MCF 10A (cell line): ENCODE measurements at regions of chr3 and their contacts with region 1.

Region 1: GRCh38 chr3:11221818-11222415 is 50.3 kb upstream of the ATG7 start:
- DNase-seq: no peak
- H3K4me3 Mint-ChIP-seq: no peak overlapping the region
- H3K27ac Mint-ChIP-seq: no peak overlapping the region
- H3K4me1 Mint-ChIP-seq: peaks cover 14% of the 10 kb centered on the region
- H3K27me3 Mint-ChIP-seq: no peaks in the 10 kb centered on the region
- CTCF ChIP-seq: peak; percentile 12

Region 2: DNA sequence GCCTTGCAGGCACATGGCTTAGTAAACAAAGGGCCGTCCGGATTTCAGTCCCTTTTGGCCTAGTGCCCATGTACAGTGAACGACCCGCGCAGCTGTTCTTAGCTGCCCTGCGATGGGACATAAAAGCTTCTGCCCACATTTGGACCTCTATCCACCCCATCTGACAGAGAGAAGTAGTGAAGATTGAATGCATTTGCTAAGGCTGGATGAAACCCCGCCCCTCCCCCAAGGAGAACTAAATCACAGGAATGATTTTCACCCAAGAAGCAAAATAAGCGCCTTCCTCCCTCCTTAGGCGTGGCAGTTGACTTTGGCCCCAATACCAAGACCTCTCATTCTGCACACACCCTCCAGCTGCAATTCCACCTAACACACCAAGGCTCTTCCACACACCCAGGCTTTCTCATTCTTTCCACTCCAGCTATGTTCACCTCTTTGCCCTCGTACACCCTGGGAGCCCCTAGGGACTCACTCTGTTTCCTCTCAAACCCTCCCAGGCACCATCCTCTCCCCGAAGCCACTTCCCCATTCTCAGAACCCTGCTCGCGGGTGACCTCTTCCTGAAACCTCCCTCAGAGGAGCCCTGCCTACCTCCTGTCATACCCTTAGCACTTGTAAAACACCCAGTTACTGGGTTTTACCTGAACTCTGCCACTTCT is 81.7 kb before region 1 on chr3:
- CTCF ChIA-PET with region 1: no interaction called
- POLR2A ChIA-PET with region 1: interaction called, 6 read pairs
- intact Hi-C with region 1: loop called (anchors 5 kb)
- DNase-seq: peak; percentile 75
- H3K4me3 Mint-ChIP-seq: peak overlapping the region; percentile 38
- H3K27ac Mint-ChIP-seq: peak overlapping the region; percentile 16
- H3K4me1 Mint-ChIP-seq: peaks cover 37% of the 10 kb centered on the region
- H3K27me3 Mint-ChIP-seq: no peaks in the 10 kb centered on the region
- CTCF ChIP-seq: no peak

Region 3: DNA sequence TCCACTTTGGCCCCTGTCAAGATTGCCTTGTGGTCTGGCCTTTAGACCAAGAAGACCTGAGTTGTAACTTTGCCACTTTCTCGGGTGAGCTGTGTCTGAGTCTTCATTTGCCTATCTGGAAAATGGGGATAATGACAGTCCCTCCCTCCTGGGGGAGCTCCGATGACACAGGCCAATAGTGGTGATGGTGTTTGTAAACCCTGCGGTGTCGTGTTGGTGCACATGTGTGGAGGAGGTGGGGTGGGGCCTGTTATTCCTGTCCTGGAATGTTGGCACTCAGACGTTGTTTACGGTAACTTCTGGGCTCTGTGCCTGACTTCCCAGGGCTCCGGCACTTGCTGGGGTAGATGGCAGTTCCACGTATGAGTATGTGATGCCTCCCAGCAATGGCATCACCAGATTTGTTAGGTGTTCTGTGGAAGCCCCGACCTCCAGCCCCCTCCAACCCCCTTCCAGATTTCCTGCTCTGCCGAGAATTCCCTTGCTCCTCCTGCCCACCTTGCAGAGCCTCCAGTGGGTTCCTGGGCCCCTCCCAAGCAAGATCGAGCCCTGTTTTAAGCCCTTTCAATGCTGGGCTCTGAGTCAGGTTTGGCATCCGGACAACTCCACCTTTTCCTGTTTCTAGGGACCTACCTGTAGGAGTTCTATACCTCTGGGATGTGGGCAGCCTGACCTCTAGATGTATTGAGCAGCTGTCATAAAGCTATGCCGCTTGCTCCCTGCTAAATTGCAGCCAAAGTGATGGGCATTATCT is 36.2 kb before region 1 on chr3:
- CTCF ChIA-PET with region 1: no interaction called
- POLR2A ChIA-PET with region 1: interaction called, 16 read pairs
- intact Hi-C with region 1: loop called (anchors 5 kb)
- DNase-seq: peak; percentile 99
- H3K4me3 Mint-ChIP-seq: peak overlapping the region; percentile 75
- H3K27ac Mint-ChIP-seq: peak overlapping the region; percentile 100
- H3K4me1 Mint-ChIP-seq: peaks cover 36% of the 10 kb centered on the region
- H3K27me3 Mint-ChIP-seq: no peaks in the 10 kb centered on the region
- CTCF ChIP-seq: no peak

Region 4: DNA sequence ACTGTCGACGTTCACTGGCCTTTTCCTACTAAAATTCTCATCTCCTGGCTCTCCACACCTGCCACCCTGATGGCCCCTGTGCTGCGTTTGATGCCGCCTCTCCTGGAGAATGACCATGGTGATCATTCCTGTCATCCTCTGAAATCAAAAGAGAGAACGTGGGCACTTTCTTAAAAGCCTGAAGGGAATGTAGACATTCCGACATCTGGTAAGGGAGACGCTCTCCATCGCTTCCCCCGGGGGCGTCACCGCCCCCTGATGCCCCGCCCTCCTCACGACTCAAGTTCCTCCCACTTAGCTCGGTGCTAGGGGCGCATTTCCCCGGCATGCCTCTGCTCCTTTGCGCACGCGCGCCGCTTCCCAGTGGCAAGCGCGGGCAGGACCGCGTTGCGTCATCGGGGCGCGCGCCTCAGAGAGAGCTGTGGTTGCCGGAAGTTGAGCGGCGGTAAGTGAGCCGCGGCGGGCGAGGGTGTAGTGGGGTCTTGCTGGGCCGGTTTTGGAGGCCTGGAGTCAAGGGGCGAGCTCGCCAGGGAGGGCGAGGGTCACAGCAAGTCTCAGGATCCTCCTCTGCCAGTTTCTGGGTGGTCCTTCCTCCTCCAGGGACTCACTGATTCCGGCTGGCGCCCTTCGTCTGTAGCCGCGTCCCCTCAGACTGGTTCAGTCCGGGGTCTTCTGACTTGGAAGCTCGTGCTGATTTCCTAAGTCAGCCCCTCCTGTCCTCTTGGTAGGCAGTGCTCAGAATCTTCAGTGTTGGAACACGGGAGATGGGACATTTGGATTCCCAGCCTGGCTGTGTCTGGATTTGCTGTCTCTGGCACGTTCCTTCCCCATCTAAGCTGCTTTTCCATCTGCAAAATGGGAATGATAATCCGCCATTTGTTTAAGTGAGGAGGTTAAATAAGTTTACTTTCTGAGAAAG is 50.3 kb after region 1 on chr3 and contains the start of gene ATG7:
- CTCF ChIA-PET with region 1: no interaction called
- POLR2A ChIA-PET with region 1: interaction called, 20 read pairs
- intact Hi-C with region 1: no loop called
- DNase-seq: peak; percentile 97
- H3K4me3 Mint-ChIP-seq: peak within 1 kb of the TSS; percentile 99
- H3K27ac Mint-ChIP-seq: peak within 1 kb of the TSS; percentile 99
- H3K4me1 Mint-ChIP-seq: peaks cover 42% of the 10 kb centered on the region
- H3K27me3 Mint-ChIP-seq: no peaks in the 10 kb centered on the region
- CTCF ChIP-seq: no peak
- total RNA-seq, gene ATG7: 52.3 and 54.0 TPM in 2 replicates